Cardiac septum (tissue), 1 donor: ENCODE measurements at regions of chr1 and their contacts with region 1.

Region 1: GRCh38 chr1:218480137-218480536 is 135.0 kb downstream of the TGFB2 start:
- DNase-seq: no peak

Region 2: DNA sequence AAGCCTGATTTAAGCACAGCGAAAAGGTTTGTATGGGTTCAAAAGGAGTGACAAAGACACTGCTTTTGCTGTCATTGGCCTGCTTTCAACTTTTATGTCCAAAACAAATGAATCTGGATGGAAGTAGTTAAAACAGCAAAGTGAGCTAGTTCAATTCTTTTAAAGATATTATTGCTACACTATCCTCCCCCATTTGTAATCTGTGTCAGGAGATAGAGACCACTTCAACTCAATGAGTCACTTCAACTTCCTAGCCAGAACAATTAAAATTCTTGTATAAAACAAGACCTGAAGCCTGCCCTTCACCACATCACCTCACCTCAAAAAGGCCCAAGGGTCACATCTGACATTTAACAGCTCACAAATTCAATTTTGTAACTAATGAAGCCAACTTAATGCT is 329.5 kb after region 1 on chr1:
- intact Hi-C with region 1: loop called (anchors 2 kb)
- DNase-seq: no peak